ENCODE measurements at regions of chr1 and their contacts with region 1.

Region 1: GRCh38 chr1:195656780-195657179 is 951.5 kb downstream of the KCNT2 start:
- DNase-seq: no peak
- ATAC-seq: no peak
- H3K4me3 Mint-ChIP-seq: no peak overlapping the region
- H3K27ac Mint-ChIP-seq: no peak overlapping the region
- H3K4me1 Mint-ChIP-seq: no peaks in the 10 kb centered on the region
- H3K27me3 Mint-ChIP-seq: no peaks in the 10 kb centered on the region

Region 2: DNA sequence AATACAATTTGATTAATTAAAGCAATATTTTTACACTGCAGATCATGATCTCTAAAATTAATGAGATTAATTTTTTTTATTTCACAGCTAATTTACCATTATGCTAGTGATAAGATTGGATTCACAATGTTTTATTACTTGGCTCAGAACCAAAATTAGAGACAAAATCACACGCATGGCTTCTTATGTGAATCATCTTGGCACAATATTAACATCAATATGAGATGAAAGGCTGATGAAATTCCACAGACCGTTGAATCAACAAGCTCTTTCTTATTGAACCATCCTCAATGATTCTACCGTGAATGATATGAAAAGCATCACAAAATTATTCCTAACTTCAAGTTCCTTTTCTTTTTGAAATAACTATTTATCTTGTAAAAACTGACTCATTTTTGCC is 406.5 kb after region 1 on chr1:
- CTCF ChIA-PET with region 1: no interaction called
- POLR2A ChIA-PET with region 1: no interaction called
- intact Hi-C with region 1: no loop called
- DNase-seq: no peak
- ATAC-seq: no peak
- H3K4me3 Mint-ChIP-seq: no peak overlapping the region
- H3K27ac Mint-ChIP-seq: no peak overlapping the region
- H3K4me1 Mint-ChIP-seq: no peaks in the 10 kb centered on the region
- H3K27me3 Mint-ChIP-seq: no peaks in the 10 kb centered on the region

Region 3: GRCh38 chr1:196295766-196296165 is 639.0 kb after region 1 on chr1:
- CTCF ChIA-PET with region 1: no interaction called
- POLR2A ChIA-PET with region 1: no interaction called
- intact Hi-C with region 1: loop called in 1 of 2 experiments (anchors 5 kb)
- DNase-seq: no peak
- ATAC-seq: no peak
- H3K4me3 Mint-ChIP-seq: no peak overlapping the region
- H3K27ac Mint-ChIP-seq: no peak overlapping the region
- H3K4me1 Mint-ChIP-seq: no peaks in the 10 kb centered on the region
- H3K27me3 Mint-ChIP-seq: no peaks in the 10 kb centered on the region